Sigmoid colon (tissue), 7 donors: ENCODE measurements at regions of chr22 and their contacts with region 1.

Region 1: GRCh38 chr22:17074648-17075002 is 10.2 kb upstream of the IL17RA start:
- DNase-seq: no peak
- H3K4me3 ChIP-seq: no peak overlapping the region
- H3K27ac ChIP-seq: no peak overlapping the region
- H3K4me1 ChIP-seq: no peaks in the 10 kb centered on the region
- H3K27me3 ChIP-seq: peaks cover 0 to 5% (median 0%) of the 10 kb centered on the region in 3 donors
- CTCF ChIP-seq: no peak
- EP300 ChIP-seq: no peak
- POLR2A ChIP-seq: no peak

Region 2: GRCh38 chr22:16834971-16835370 is 239.7 kb before region 1 on chr22:
- intact Hi-C with region 1: no loop called
- DNase-seq: no peak
- H3K4me3 ChIP-seq: no peak overlapping the region
- H3K27ac ChIP-seq: no peak overlapping the region
- H3K4me1 ChIP-seq: no peaks in the 10 kb centered on the region
- H3K27me3 ChIP-seq: no peaks in the 10 kb centered on the region
- CTCF ChIP-seq: no peak
- EP300 ChIP-seq: no peak
- POLR2A ChIP-seq: no peak

Region 3: GRCh38 chr22:17501679-17502285 is 427.2 kb after region 1 on chr22:
- intact Hi-C with region 1: loop called (anchors 5 kb)
- DNase-seq: no peak
- H3K4me3 ChIP-seq: no peak overlapping the region
- H3K27ac ChIP-seq: no peak overlapping the region
- H3K4me1 ChIP-seq: no peaks in the 10 kb centered on the region
- H3K27me3 ChIP-seq: no peaks in the 10 kb centered on the region
- CTCF ChIP-seq: peak; percentile 27 to 53 (median 48)
- EP300 ChIP-seq: no peak
- POLR2A ChIP-seq: no peak